Activated naive CD4-positive, alpha-beta T cell treated with anti-CD3 and anti-CD28 coated beads, Interleukin-2, amount 10 ng/mL, durations not matched to agents 7 days and 5 days (primary cell): ENCODE measurements at regions of chr16 and their contacts with region 1.

Region 1: GRCh38 chr16:74709441-74709877 is 8.8 kb upstream of the MLKL start:
- DNase-seq: peak; percentile 83
- H3K4me3 Mint-ChIP-seq: no peak overlapping the region
- H3K27ac Mint-ChIP-seq: peak overlapping the region; percentile 8
- H3K4me1 Mint-ChIP-seq: peaks cover 10% of the 10 kb centered on the region
- H3K27me3 Mint-ChIP-seq: peaks cover 11% of the 10 kb centered on the region

Region 2: DNA sequence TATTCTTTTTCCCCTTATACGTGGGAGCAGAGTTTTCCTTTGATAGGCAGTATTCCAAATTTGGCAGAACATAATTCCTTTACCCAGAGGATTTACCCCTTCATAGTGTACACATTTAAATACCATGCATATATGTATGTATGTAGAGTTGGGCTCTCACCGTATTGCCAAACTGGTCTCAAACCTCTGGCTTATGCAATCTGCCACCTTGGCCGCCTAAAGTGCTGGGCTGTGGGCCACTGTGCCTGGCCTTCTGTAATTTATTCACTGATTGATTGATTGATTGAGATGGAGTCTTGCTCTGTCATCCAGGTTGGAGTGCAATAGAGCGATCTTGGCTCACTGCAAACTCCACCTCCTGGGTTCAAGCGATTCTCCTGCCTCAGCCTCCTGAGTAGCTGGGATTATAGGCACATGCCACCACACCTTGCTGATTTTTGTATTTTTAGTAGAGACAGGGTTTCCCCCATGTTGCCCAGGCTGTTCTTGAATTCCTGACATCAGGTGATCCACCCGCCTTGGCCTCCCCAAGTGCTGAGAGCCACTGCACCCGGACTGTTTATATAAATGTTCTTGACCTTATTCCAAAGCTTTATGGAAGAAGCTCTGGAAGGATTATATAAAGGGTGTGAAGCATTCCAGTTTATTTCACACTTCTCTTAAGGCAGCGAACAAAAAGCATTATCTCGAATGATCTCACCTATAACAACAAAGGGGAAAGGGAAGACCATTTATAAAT is 117.4 kb before region 1 on chr16:
- CTCF ChIA-PET with region 1: no interaction called
- DNase-seq: no peak
- H3K4me3 Mint-ChIP-seq: no peak overlapping the region
- H3K27ac Mint-ChIP-seq: no peak overlapping the region
- H3K4me1 Mint-ChIP-seq: peaks cover 35% of the 10 kb centered on the region
- H3K27me3 Mint-ChIP-seq: no peaks in the 10 kb centered on the region

Region 3: GRCh38 chr16:74606521-74607310 is 102.7 kb before region 1 on chr16 and contains the start of gene GLG1:
- CTCF ChIA-PET with region 1: no interaction called
- DNase-seq: peak; percentile 94
- H3K4me3 Mint-ChIP-seq: peak within 1 kb of the TSS; percentile 99
- H3K27ac Mint-ChIP-seq: peak within 1 kb of the TSS; percentile 97
- H3K4me1 Mint-ChIP-seq: peaks cover 73% of the 10 kb centered on the region
- H3K27me3 Mint-ChIP-seq: no peaks in the 10 kb centered on the region

Region 4: DNA sequence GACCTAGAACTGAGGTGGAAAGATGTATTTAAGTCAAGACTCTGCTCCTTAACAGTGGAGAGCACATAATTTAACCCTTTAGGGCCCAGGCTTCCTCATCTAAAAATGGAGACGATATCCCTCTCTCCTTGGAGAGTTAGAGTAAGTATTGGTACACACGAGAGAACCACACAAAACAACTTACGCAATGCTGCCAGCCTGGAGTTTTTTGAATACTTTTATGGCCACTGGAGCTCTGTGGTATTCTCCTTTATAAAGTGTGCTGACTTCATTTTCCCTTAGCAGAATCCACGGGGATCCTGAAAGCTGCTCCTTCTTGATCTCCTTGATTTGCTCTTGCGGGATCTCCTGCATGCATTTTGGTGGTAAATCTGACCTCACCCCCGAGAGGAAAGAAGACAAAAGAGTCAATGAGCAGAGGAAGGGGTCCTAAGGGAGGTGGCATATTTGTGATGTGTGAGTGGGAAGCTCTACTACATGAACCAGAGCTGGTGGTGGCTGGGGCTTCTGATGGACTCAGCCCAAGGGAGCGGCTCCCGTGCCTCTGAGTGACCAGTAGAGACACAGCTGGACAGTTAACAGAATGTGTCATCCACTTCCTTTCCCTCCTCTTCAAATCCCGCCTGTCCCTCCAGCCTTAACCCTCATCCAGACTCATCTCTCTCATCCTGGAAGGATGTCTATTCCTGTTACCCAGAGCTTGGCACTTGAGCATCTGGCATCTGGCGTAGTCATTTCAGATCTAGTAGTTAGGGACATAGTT is 18.2 kb before region 1 on chr16:
- CTCF ChIA-PET with region 1: no interaction called
- DNase-seq: no peak
- H3K4me3 Mint-ChIP-seq: no peak overlapping the region
- H3K27ac Mint-ChIP-seq: no peak overlapping the region
- H3K4me1 Mint-ChIP-seq: peaks cover 6% of the 10 kb centered on the region
- H3K27me3 Mint-ChIP-seq: no peaks in the 10 kb centered on the region

Region 5: DNA sequence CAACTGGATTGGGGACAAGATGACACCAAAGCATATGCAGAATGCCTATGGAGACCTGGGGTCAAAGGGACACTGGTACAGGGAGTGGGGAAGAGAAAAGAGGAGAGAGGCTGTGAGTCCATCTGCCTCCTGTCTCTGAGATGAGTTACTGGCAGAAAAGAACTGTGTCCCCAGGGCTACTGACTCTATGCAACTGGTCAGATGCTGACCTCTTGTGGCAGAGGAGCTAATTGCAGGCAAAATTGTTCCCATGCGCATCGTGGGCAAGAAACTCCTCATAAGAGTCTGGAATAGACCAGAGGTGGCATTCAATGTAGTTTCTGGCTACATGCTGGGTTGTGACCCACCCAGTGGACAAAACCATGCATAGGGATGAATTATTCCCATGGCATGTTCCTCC is 17.3 kb after region 1 on chr16:
- CTCF ChIA-PET with region 1: interaction called, 15 read pairs
- DNase-seq: peak; percentile 54
- H3K4me3 Mint-ChIP-seq: no peak overlapping the region
- H3K27ac Mint-ChIP-seq: no peak overlapping the region
- H3K4me1 Mint-ChIP-seq: peaks cover 14% of the 10 kb centered on the region
- H3K27me3 Mint-ChIP-seq: peaks cover 16% of the 10 kb centered on the region

Region 6: GRCh38 chr16:74862741-74863244 is 153.3 kb after region 1 on chr16:
- CTCF ChIA-PET with region 1: interaction called, 54 read pairs
- DNase-seq: no peak
- H3K4me3 Mint-ChIP-seq: no peak overlapping the region
- H3K27ac Mint-ChIP-seq: no peak overlapping the region
- H3K4me1 Mint-ChIP-seq: peaks cover 18% of the 10 kb centered on the region
- H3K27me3 Mint-ChIP-seq: peaks cover 9% of the 10 kb centered on the region